ENCODE measurements at regions of chr4 and their contacts with region 1.

Region 1: GRCh38 chr4:25172961-25173915 is 13.0 kb upstream of the SEPSECS start:
- DNase-seq: peak in 2 of 10 donors; percentile 10 to 15

Region 2: DNA sequence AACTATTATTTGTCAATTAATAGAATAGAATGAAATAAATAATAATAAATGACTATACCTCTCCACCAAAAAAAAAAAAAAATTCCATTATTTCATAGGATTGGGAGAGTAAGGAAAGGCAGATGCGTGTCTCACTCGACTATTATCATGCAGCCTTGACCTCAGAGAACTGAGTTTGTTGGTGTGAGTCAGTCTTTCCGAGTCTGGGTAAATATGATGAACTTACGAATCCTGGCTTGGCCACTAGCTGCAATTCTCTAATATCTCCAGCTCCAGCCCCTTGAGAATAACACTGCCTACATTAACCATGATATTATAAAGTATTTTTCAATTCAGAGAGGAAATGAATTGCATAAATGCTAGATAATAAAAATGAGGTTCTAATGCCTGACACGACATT is 542.3 kb before region 1 on chr4:
- intact Hi-C with region 1: no loop called
- DNase-seq: no peak

Region 3: DNA sequence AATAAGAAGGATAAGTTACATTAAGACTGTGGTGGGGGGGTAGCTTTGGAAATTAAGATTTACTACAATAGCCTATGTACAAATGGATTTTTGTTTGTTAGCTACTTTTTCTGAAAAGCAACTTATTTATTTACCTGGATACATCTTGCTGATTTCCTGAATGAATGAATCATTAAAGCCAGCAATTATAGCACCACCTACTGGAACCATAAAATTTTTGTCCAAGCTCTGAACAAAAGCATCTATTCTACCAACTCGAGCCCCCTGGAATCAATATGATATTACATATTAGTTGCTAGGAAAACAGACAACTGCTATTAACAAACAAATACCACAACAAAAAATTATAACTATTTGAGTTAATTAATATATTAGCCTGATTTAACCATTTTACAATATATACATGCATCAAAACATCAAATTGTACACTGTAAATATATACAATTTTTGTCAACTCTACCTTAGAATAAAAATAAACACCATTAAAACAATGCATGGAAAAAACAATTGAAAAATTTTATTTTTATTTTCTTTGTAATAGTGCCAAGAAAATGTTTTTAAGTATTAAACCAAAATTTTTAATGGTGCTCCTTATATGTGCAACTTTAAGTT is 28.3 kb before region 1 on chr4:
- intact Hi-C with region 1: no loop called
- DNase-seq: no peak

Region 4: DNA sequence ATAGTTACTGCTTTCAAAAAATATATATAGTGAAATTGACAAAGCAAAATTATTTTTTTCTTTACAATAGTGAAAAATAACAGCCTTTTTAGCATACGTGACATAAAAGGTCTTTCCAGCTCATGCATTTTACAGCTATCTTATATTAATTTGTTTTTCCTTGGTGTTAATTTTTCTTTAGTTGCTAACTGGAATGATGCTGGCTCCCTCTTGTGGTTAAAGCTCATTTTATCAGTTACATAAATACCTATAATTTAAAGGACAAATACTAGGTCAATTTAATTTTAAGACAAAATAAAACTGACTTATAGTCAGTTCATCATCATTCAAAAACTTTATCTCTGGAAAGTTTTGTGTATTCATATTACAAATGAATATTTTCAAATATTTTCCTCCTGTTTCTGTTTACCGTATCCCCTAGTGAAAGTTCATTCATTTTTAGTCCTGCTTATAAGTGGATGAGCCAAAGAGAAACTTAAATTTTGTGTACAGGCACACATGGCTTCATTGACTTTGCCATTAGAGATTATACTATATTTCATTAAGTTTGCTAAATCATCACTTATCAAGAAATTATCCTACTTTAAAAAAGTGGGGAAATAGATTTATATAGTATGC is 193.9 kb after region 1 on chr4:
- intact Hi-C with region 1: loop called (anchors 10 kb)
- DNase-seq: no peak

Measured in posterior cingulate gyrus (tissue), 11 donors.